Activated naive CD4-positive, alpha-beta T cell treated with anti-CD3 and anti-CD28 coated beads for 36 hours (primary cell): ENCODE measurements at regions of chr17 and their contacts with region 1.

Region 1: GRCh38 chr17:76153640-76154039 is 12.6 kb upstream of the FOXJ1 start:
- DNase-seq: no peak
- H3K4me3 Mint-ChIP-seq: no peak overlapping the region
- H3K27ac Mint-ChIP-seq: peak overlapping the region; percentile 38
- H3K4me1 Mint-ChIP-seq: peaks cover 42% of the 10 kb centered on the region
- H3K27me3 Mint-ChIP-seq: no peaks in the 10 kb centered on the region

Region 2: GRCh38 chr17:76131051-76131691 is 22.5 kb before region 1 on chr17:
- CTCF ChIA-PET with region 1: no interaction called
- intact Hi-C with region 1: no loop called
- DNase-seq: no peak
- H3K4me3 Mint-ChIP-seq: no peak overlapping the region
- H3K27ac Mint-ChIP-seq: no peak overlapping the region
- H3K4me1 Mint-ChIP-seq: peaks cover 27% of the 10 kb centered on the region
- H3K27me3 Mint-ChIP-seq: no peaks in the 10 kb centered on the region

Region 3: GRCh38 chr17:76141212-76142038 is 12.2 kb before region 1 on chr17 and contains the start of gene FOXJ1:
- CTCF ChIA-PET with region 1: interaction called, 10 read pairs
- intact Hi-C with region 1: no loop called
- DNase-seq: peak; percentile 92
- H3K4me3 Mint-ChIP-seq: peak within 1 kb of the TSS; percentile 72
- H3K27ac Mint-ChIP-seq: no peak within 1 kb of the TSS
- H3K4me1 Mint-ChIP-seq: peaks cover 58% of the 10 kb centered on the region
- H3K27me3 Mint-ChIP-seq: peaks cover 2% of the 10 kb centered on the region
- total RNA-seq, gene FOXJ1: 0.60 to 0.84 TPM

Region 4: DNA sequence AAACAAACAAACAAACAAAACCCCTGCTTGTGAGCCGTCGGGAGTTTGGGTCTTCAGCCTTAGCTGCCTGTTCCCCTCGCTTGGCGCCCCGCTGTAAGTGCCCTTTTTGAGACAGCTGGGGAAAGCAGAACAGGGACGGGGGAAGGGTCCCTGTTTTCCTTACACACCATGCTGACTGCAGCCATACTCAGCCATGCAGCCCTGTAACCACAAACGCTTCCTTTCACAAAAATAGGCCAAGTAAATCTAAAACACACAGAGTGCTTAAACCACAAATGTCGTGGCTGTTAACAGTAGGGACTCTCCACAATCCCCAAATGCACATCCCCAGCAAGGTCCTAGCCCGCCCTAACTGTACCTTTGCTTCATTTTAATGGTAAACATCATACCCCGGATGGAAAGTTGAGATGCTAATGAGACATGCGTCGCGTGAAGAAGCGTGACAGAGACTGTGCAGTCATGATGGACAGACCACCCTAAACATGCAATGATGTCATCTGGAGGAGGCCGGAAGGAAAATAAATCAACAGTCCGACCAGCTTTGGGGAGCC is 844.4 kb after region 1 on chr17:
- CTCF ChIA-PET with region 1: no interaction called
- intact Hi-C with region 1: no loop called
- DNase-seq: peak; percentile 85
- H3K4me3 Mint-ChIP-seq: peak overlapping the region; percentile 45
- H3K27ac Mint-ChIP-seq: peak overlapping the region; percentile 78
- H3K4me1 Mint-ChIP-seq: peaks cover 55% of the 10 kb centered on the region
- H3K27me3 Mint-ChIP-seq: no peaks in the 10 kb centered on the region